Activated T-helper 1 cell treated with anti-CD3 and anti-CD28 coated beads, Interleukin-12 subunit alpha, Interleukin-12 subunit beta, Interleukin-2, Interleukin-4 antibody, amounts not matched to agents 30 ng/mL and 10 ng/mL and 1 ng/mL, durations not matched to agents 14 hours and 24 hours and 36 hours (primary cell): ENCODE measurements at regions of chr10 and their contacts with region 1.

Region 1: GRCh38 chr10:73785221-73785720 is at the start of gene ZSWIM8:
- DNase-seq: peak; percentile 79
- H3K4me3 Mint-ChIP-seq: peak within 1 kb of the TSS; percentile 99
- H3K27ac Mint-ChIP-seq: peak within 1 kb of the TSS; percentile 87
- H3K4me1 Mint-ChIP-seq: peaks cover 48% of the 10 kb centered on the region
- H3K27me3 Mint-ChIP-seq: no peaks in the 10 kb centered on the region
- total RNA-seq, gene ZSWIM8: 54.2 and 56.3 TPM in 2 replicates

Region 2: GRCh38 chr10:73246783-73247508 is 538.3 kb before region 1 on chr10 and contains the start of gene DNAJC9:
- intact Hi-C with region 1: loop called (anchors 10 kb)
- DNase-seq: peak; percentile 96
- H3K4me3 Mint-ChIP-seq: peak within 1 kb of the TSS; percentile 97
- H3K27ac Mint-ChIP-seq: peak within 1 kb of the TSS; percentile 95
- H3K4me1 Mint-ChIP-seq: peaks cover 67% of the 10 kb centered on the region
- H3K27me3 Mint-ChIP-seq: no peaks in the 10 kb centered on the region
- total RNA-seq, gene DNAJC9: 55.4 and 55.5 TPM in 2 replicates

Region 3: GRCh38 chr10:73772280-73773151 is 12.8 kb before region 1 on chr10:
- intact Hi-C with region 1: loop called (anchors 1 kb)
- DNase-seq: peak; percentile 85
- H3K4me3 Mint-ChIP-seq: peak overlapping the region; percentile 94
- H3K27ac Mint-ChIP-seq: peak overlapping the region; percentile 91
- H3K4me1 Mint-ChIP-seq: peaks cover 67% of the 10 kb centered on the region
- H3K27me3 Mint-ChIP-seq: no peaks in the 10 kb centered on the region

Region 4: DNA sequence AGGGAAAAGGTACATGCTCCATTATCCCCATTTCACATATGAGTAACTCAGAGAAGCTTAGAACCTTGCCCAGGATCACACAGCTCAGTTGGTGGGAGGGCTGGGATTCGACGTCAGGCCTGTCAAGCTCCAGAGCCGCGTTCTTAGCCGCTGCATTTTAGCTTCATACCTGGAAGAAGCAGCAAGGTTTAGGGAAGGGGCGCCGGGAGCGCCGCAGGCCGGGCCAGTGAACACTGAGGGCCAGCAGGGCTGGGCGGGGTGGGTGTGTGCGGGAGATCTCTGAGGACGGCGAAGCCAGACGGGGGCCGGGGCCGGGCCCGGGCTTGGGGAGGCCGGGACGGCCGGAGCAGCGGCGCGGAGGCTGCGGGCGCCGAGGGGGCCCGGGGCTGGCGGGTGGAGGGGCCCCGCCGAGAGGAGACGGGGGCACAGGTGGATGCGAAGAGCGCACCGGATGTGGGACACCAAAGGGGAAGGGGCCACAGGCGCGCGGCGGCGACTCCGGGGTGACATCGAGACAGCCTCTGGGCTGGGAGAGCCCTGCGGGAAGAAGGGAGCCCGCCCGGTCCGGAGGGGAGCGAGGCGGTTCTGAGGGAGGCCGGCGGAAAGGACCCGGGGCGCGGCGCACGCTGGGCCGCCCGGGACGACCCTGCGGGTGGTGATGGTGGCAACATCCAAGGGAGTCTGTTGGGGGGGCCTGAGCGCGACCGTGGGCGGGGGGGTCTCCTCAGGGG is 25.6 kb after region 1 on chr10:
- intact Hi-C with region 1: loop called (anchors 1 kb)
- DNase-seq: peak; percentile 54
- H3K4me3 Mint-ChIP-seq: peak overlapping the region; percentile 97
- H3K27ac Mint-ChIP-seq: peak overlapping the region; percentile 98
- H3K4me1 Mint-ChIP-seq: peaks cover 50% of the 10 kb centered on the region
- H3K27me3 Mint-ChIP-seq: no peaks in the 10 kb centered on the region

Region 5: GRCh38 chr10:75210282-75211006 is 1425.2 kb after region 1 on chr10 and contains the start of gene VDAC2:
- intact Hi-C with region 1: loop called (anchors 1 kb)
- DNase-seq: peak; percentile 95
- H3K4me3 Mint-ChIP-seq: peak within 1 kb of the TSS; percentile 92
- H3K27ac Mint-ChIP-seq: peak within 1 kb of the TSS; percentile 100
- H3K4me1 Mint-ChIP-seq: peaks cover 30% of the 10 kb centered on the region
- H3K27me3 Mint-ChIP-seq: no peaks in the 10 kb centered on the region
- total RNA-seq, gene VDAC2: 220 and 224 TPM in 2 replicates